ENCODE measurements at regions of chr3 and their contacts with region 1.

Region 1: DNA sequence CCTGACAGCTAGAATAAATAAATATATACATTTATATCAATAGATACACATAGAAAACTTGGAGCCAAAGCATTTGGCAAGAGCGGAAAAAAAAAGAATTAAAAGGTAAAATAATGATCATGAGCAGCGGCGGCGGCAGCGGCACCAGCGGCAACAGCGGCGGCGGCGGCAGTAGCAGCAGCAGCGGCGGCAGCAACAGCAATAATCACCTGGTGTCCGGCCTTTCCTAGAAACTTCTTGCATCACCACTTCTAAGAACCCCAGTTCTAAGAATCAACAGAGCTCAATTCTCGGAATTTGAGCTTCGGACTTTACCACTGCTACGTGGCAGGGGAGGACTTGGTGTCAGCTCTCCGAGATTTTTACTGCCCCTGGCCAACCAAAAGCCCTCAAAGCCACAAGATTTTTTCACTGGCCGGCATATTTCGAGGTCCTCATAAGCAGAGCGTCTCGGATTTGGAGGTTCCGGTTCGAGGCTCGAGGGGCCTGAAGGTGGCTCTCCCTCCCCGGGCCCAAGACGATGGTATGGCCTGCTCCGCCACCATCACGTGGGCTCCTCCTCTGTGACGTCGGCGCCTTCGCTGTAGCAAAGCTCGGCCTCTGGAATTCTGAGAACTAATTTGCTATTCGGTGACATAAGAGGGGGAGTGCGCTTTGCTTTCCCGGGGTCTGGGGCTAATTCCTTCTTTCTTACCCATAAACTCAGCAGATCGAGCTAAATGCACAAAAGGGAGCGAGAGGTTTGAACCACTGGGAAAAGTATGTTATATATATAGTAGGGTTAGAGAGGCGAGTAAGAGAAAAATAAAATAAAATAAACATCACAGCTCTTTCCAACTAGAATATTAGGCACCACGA is at the start of gene BCL6:
- DNase-seq: peak; percentile 96
- ATAC-seq: peak; percentile 88
- H3K4me3 ChIP-seq: peak within 1 kb of the TSS; percentile 84 to 90
- H3K27ac ChIP-seq: peak within 1 kb of the TSS; percentile 99 to 100
- H3K4me1 ChIP-seq: peaks cover 0 to 6% of the 10 kb centered on the region in 2 donors
- H3K27me3 ChIP-seq: no peaks in the 10 kb centered on the region
- total RNA-seq, gene BCL6: 136 to 154 TPM

Region 2: GRCh38 chr3:187227658-187228258 is 517.7 kb before region 1 on chr3:
- intact Hi-C with region 1: no loop called
- DNase-seq: no peak
- ATAC-seq: peak; percentile 22
- H3K4me3 ChIP-seq: no peak overlapping the region
- H3K27ac ChIP-seq: peak overlapping the region in 1 of 2 donors; percentile 9
- H3K4me1 ChIP-seq: peaks cover 0 to 2% of the 10 kb centered on the region in 2 donors
- H3K27me3 ChIP-seq: no peaks in the 10 kb centered on the region

Region 3: GRCh38 chr3:188212308-188212969 is 467.0 kb after region 1 on chr3:
- intact Hi-C with region 1: loop called (anchors 5 to 10 kb)
- DNase-seq: peak; percentile 63 to 82
- ATAC-seq: peak; percentile 64
- H3K4me3 ChIP-seq: peak overlapping the region; percentile 79 to 99
- H3K27ac ChIP-seq: peak overlapping the region; percentile 100
- H3K4me1 ChIP-seq: peaks cover 8 to 15% of the 10 kb centered on the region in 2 donors
- H3K27me3 ChIP-seq: no peaks in the 10 kb centered on the region

Region 4: GRCh38 chr3:188400494-188401243 is 655.2 kb after region 1 on chr3:
- intact Hi-C with region 1: loop called in 1 of 2 experiments (anchors 10 kb)
- DNase-seq: no peak
- ATAC-seq: no peak
- H3K4me3 ChIP-seq: no peak overlapping the region
- H3K27ac ChIP-seq: peak overlapping the region in 1 of 2 donors; percentile 44
- H3K4me1 ChIP-seq: peaks cover 8 to 36% of the 10 kb centered on the region in 2 donors
- H3K27me3 ChIP-seq: no peaks in the 10 kb centered on the region

Region 5: GRCh38 chr3:188489639-188490405 is 744.4 kb after region 1 on chr3:
- intact Hi-C with region 1: loop called in 1 of 2 experiments (anchors 10 kb)
- DNase-seq: no peak
- ATAC-seq: no peak
- H3K4me3 ChIP-seq: no peak overlapping the region
- H3K27ac ChIP-seq: no peak overlapping the region
- H3K4me1 ChIP-seq: peaks cover 4 to 9% of the 10 kb centered on the region in 2 donors
- H3K27me3 ChIP-seq: no peaks in the 10 kb centered on the region

Region 6: GRCh38 chr3:188627652-188628051 is 882.2 kb after region 1 on chr3:
- intact Hi-C with region 1: loop called in 1 of 2 experiments (anchors 10 kb)
- DNase-seq: no peak
- ATAC-seq: no peak
- H3K4me3 ChIP-seq: no peak overlapping the region
- H3K27ac ChIP-seq: no peak overlapping the region
- H3K4me1 ChIP-seq: peaks cover 6 to 9% of the 10 kb centered on the region in 2 donors
- H3K27me3 ChIP-seq: no peaks in the 10 kb centered on the region

Region 7: GRCh38 chr3:188796122-188796631 is 1050.7 kb after region 1 on chr3:
- intact Hi-C with region 1: loop called in 1 of 2 experiments (anchors 10 kb)
- DNase-seq: peak in 1 of 2 donors; percentile 68
- ATAC-seq: peak; percentile 33
- H3K4me3 ChIP-seq: no peak overlapping the region
- H3K27ac ChIP-seq: no peak overlapping the region
- H3K4me1 ChIP-seq: peaks cover 6 to 7% of the 10 kb centered on the region in 2 donors
- H3K27me3 ChIP-seq: no peaks in the 10 kb centered on the region